Activated B cell treated with CpG ODN at 0.5 μM for 24 hours (primary cell): ENCODE measurements at regions of chr5 and their contacts with region 1.

Region 1: DNA sequence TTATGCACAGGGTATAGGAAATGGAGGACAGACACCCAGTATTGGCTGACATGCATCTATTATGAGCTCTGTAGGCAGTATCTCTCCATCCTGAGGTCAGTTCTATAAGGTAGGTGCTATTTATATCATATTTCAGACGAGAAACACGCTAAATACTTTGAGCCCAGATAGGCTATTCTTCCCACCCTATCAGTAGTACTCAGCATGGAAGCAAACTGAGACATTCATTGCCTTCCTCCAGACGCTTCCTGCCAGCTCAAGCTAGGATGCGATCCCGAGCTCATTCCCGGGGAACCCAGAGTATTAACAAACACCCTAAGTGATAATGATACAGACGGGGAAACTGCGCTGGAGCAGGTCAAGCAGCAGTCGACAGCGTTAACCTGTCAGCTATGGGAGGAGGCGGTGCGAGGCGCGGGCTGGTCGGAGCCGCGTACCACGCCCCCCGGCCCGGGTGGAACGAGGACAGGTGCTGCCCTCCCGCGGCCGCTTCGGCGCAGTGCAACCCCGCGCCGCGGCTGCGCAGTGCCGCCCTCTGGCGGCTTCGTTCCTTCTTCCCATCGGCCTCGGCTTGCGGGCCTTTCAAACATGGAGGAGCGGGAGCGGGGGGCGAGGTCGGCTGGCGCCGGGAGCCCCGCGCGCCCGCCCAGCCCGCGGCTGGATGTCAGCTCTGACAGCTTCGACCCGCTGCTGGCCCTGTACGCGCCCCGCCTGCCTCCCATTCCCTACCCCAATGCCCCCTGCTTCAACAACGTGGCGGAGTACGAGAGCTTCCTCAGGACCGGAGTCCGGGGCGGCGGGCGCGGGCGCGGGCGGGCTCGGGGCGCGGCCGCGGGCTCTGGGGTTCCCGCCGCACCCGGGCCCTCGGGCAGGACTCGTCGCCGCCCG is at the start of gene LSM11:
- DNase-seq: peak; percentile 96
- ATAC-seq: peak; percentile 96
- H3K4me3 Mint-ChIP-seq: peak within 1 kb of the TSS; percentile 92
- H3K27ac Mint-ChIP-seq: peak within 1 kb of the TSS; percentile 80
- H3K4me1 Mint-ChIP-seq: peaks cover 22% of the 10 kb centered on the region
- H3K27me3 Mint-ChIP-seq: no peaks in the 10 kb centered on the region
- CTCF ChIP-seq: peak; percentile 67
- total RNA-seq, gene LSM11: 4.6 and 5.0 TPM in 2 replicates

Region 2: GRCh38 chr5:157148734-157149615 is 594.4 kb before region 1 on chr5:
- CTCF ChIA-PET with region 1: no interaction called
- POLR2A ChIA-PET with region 1: no interaction called
- intact Hi-C with region 1: loop called (anchors 2 kb)
- DNase-seq: no peak
- ATAC-seq: peak; percentile 81
- H3K4me3 Mint-ChIP-seq: no peak overlapping the region
- H3K27ac Mint-ChIP-seq: no peak overlapping the region
- H3K4me1 Mint-ChIP-seq: peaks cover 8% of the 10 kb centered on the region
- H3K27me3 Mint-ChIP-seq: no peaks in the 10 kb centered on the region
- CTCF ChIP-seq: peak; percentile 45

Region 3: DNA sequence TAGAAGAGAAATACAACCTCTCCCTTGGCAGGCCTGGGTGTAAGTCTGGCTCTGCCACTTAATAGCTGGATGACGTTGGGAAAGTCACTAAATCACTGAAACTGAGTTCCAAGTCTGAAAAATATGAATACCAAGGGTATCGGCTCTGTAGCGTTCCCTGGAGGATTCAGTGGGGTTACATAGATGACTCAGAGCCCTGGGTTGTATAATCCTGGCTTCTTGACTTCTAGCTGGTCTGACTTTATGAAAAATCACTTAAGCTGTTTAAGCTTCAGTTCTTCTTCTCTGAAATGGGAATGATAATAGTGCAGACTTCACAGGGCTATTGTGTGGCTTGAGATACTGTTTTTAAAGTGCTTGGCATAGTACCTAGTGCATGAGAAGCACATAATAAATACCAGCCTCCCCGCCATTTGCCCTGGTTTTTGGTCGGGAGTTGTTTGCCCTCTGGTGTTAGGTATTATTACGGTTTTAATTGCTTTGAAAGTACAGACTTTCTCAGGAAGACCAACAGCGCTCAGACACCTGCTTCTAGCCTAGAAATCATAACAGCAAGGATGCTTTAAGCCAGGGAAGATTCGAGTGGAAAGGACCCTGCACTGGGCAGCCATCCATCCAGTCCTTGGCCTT is 434.5 kb before region 1 on chr5:
- CTCF ChIA-PET with region 1: no interaction called
- POLR2A ChIA-PET with region 1: no interaction called
- intact Hi-C with region 1: no loop called
- DNase-seq: no peak
- ATAC-seq: peak; percentile 80
- H3K4me3 Mint-ChIP-seq: peak overlapping the region; percentile 3
- H3K27ac Mint-ChIP-seq: peak overlapping the region; percentile 89
- H3K4me1 Mint-ChIP-seq: peaks cover 53% of the 10 kb centered on the region
- H3K27me3 Mint-ChIP-seq: no peaks in the 10 kb centered on the region
- CTCF ChIP-seq: no peak

Region 4: DNA sequence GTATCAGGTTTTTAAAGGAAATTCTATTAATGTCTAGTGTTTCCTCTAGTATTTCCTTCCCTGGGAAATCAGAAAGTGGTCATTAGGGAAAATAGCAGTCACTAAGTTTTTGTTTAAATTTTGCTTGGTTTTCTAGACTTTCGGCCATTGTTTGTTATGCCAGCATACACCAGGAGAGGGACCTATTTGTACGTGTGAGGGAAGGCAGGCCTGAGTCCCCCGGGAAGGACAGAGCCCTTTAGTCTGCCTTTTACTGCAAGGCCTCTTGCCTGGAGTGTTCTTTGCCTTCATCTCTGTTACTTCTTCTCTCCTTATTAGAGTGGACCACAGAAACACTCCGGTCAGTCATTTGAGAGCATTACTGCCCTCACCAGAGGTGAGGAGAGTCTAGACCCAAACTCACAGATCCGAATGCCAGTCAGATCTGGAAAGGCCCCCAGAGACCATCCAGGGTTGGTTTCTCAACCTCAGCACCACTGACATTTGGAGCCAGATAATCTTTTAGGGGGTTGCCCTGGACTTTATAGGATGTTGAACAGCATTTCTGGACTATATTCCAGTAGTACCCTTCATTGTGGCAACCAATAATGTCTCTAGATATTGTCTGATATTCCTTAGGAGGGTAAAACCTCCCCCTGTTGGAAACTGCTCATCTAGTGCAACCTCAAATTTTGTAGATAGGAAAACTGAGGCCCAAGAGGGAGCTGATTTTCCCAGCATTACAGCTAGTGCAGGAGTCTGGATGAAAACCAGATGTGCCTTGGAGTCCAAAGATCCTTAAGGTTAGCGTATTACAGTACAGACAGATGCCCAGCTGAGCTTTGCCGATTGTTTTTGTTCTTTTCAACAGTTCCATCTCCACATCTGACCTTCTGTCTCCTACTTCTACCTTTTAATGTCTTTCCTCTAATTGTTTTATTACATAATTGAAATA is 376.4 kb before region 1 on chr5:
- CTCF ChIA-PET with region 1: no interaction called
- POLR2A ChIA-PET with region 1: no interaction called
- intact Hi-C with region 1: loop called (anchors 5 kb)
- DNase-seq: no peak
- ATAC-seq: no peak
- H3K4me3 Mint-ChIP-seq: no peak overlapping the region
- H3K27ac Mint-ChIP-seq: no peak overlapping the region
- H3K4me1 Mint-ChIP-seq: no peaks in the 10 kb centered on the region
- H3K27me3 Mint-ChIP-seq: no peaks in the 10 kb centered on the region
- CTCF ChIP-seq: no peak

Region 5: GRCh38 chr5:157486221-157486681 is 257.2 kb before region 1 on chr5:
- CTCF ChIA-PET with region 1: interaction called, 4 read pairs
- POLR2A ChIA-PET with region 1: no interaction called
- intact Hi-C with region 1: loop called (anchors 2 kb)
- DNase-seq: no peak
- ATAC-seq: peak; percentile 33
- H3K4me3 Mint-ChIP-seq: peak overlapping the region; percentile 56
- H3K27ac Mint-ChIP-seq: peak overlapping the region; percentile 95
- H3K4me1 Mint-ChIP-seq: peaks cover 86% of the 10 kb centered on the region
- H3K27me3 Mint-ChIP-seq: no peaks in the 10 kb centered on the region
- CTCF ChIP-seq: no peak

Region 6: GRCh38 chr5:157670662-157671591 is 72.5 kb before region 1 on chr5 and contains the start of gene C5orf52:
- CTCF ChIA-PET with region 1: interaction called, 63 read pairs
- POLR2A ChIA-PET with region 1: interaction called, 4 read pairs
- intact Hi-C with region 1: loop called (anchors 1 kb)
- DNase-seq: no peak
- ATAC-seq: peak; percentile 55
- H3K4me3 Mint-ChIP-seq: peak within 1 kb of the TSS; percentile 95
- H3K27ac Mint-ChIP-seq: peak within 1 kb of the TSS; percentile 65
- H3K4me1 Mint-ChIP-seq: peaks cover 28% of the 10 kb centered on the region
- H3K27me3 Mint-ChIP-seq: no peaks in the 10 kb centered on the region
- CTCF ChIP-seq: no peak
- total RNA-seq, gene C5orf52: not detected in 2 replicates

Region 7: DNA sequence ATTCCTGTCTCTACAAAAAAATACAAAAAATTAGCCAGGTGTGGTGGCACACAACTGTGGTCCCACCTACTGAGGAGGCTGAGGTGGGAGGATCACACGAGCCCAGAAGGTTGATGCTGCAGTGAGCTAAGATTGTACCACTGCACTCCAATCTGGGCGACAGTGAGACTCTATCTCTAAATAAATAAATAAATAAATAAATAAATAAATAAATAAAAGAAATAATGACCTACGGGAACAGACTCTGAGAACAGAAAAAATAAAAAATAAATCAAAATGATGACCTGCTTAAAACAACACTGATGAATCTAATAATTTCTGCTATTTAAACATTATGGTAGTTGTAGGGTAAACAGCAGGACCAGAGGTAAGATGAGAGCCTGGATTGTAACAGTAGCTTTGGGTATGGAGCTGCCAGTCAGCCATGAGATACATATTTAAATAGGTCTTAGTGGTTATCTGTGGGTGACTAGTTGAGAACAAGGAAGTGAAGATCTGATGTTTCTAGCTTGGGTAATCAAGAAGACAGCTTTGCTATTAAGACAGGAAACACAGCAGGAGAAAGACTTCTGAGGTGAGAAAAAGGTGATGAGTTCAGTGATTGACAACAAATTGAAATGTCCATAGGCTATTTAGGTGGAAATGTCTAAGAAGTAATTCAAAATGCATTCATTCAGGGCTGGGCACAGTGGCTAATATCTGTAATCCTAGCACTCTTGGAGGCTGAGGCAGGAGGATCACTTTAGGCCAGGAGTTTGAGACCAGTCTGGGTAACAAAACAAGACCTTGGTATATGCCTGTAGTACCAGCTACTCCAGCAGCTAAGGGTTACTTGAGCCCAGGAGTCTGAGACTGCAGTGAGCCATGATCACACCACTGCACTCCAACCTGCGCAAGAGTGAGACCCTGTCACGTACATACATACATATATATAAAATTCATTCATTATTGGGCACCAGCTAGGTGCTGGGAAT is 1454.9 kb after region 1 on chr5:
- CTCF ChIA-PET with region 1: no interaction called
- POLR2A ChIA-PET with region 1: no interaction called
- intact Hi-C with region 1: no loop called
- DNase-seq: no peak
- ATAC-seq: peak; percentile 98
- H3K4me3 Mint-ChIP-seq: peak overlapping the region; percentile 73
- H3K27ac Mint-ChIP-seq: peak overlapping the region; percentile 91
- H3K4me1 Mint-ChIP-seq: peaks cover 57% of the 10 kb centered on the region
- H3K27me3 Mint-ChIP-seq: no peaks in the 10 kb centered on the region
- CTCF ChIP-seq: no peak

Region 8: DNA sequence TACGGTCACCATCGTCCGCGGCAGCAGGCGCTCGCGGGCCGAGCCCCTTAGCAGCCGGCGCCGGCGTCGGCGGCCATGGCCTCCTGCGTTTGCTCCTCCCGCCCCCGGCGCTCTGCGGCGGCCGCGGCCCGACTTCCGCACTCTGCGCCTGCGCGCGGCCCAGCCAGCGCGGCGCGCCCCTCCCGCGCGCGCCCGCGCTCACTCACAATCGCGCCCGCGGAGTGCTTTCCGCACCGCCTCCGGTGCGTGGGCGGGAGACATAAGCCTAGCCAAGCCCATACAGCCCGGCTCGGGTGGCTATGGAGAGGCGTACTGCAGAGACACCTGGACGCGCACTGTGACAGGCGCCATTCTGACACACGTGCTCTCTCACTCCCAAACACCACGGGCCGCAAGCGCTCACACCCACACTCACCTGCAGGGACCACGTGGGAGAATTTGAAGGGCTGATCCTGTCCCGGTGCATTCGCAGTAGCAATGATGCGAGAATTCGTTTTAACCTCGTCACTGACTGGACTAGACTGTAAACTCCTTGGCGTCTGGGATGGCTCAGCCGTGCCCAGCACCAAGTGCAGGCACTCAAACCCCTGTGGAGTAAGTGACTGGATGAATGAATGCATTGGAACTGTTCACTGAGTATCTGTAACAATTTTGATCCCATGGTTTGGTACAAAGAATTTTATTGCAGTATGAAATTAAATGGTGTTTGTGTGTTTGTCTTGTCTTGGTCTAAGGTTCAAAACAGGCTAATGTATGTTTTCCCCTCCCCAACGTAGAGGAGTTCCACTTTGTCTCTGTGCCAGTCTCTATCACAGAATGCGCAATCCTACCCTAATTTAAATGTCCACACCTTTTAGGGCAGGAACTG is 1466.3 kb after region 1 on chr5 and contains the start of gene RNF145:
- CTCF ChIA-PET with region 1: no interaction called
- POLR2A ChIA-PET with region 1: no interaction called
- intact Hi-C with region 1: loop called (anchors 5 kb)
- DNase-seq: peak; percentile 93
- ATAC-seq: peak; percentile 79
- H3K4me3 Mint-ChIP-seq: peak within 1 kb of the TSS; percentile 97
- H3K27ac Mint-ChIP-seq: peak within 1 kb of the TSS; percentile 96
- H3K4me1 Mint-ChIP-seq: peaks cover 57% of the 10 kb centered on the region
- H3K27me3 Mint-ChIP-seq: no peaks in the 10 kb centered on the region
- CTCF ChIP-seq: no peak
- total RNA-seq, gene RNF145: 66.1 and 79.1 TPM in 2 replicates